Aorta (tissue), 5 donors: ENCODE measurements at regions of chr20 and their contacts with region 1.

Region 1: GRCh38 chr20:59087829-59088433 is 45.3 kb upstream of the PRELID3B start:
- DNase-seq: peak; percentile 86 to 93
- ATAC-seq: peak; percentile 82
- H3K4me3 ChIP-seq: no peak overlapping the region
- H3K27ac ChIP-seq: no peak overlapping the region
- H3K4me1 ChIP-seq: no peaks in the 10 kb centered on the region
- H3K27me3 ChIP-seq: no peaks in the 10 kb centered on the region

Region 2: GRCh38 chr20:58870239-58871014 is 217.5 kb before region 1 on chr20:
- intact Hi-C with region 1: loop called in 1 of 2 experiments (anchors 10 kb)
- DNase-seq: peak; percentile 79 to 85
- ATAC-seq: peak; percentile 79
- H3K4me3 ChIP-seq: no peak overlapping the region
- H3K27ac ChIP-seq: no peak overlapping the region
- H3K4me1 ChIP-seq: no peaks in the 10 kb centered on the region
- H3K27me3 ChIP-seq: no peaks in the 10 kb centered on the region

Region 3: DNA sequence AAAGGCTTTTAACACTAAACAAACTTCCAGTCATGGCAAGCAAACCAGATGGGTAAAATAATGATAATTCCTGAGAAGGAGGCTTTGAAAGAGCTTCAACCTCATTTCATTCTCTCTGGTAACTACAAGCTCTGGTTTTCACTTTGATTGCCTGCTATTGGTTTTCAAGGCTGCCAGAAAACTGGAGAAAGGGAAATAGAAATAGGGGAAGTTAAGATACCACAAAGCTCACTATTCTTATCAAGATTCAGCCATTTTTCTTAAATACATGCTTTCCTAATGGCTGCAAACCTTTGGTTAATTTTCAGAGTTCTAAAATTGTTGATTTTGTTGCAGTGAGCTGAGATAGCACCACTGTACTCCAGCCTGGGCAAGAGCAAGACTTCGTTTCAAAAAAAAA is 149.4 kb before region 1 on chr20:
- intact Hi-C with region 1: no loop called
- DNase-seq: no peak
- ATAC-seq: no peak
- H3K4me3 ChIP-seq: no peak overlapping the region
- H3K27ac ChIP-seq: no peak overlapping the region
- H3K4me1 ChIP-seq: no peaks in the 10 kb centered on the region
- H3K27me3 ChIP-seq: no peaks in the 10 kb centered on the region

Region 4: GRCh38 chr20:59020938-59021551 is 66.9 kb before region 1 on chr20:
- intact Hi-C with region 1: no loop called
- DNase-seq: no peak
- ATAC-seq: no peak
- H3K4me3 ChIP-seq: no peak overlapping the region
- H3K27ac ChIP-seq: no peak overlapping the region
- H3K4me1 ChIP-seq: no peaks in the 10 kb centered on the region
- H3K27me3 ChIP-seq: no peaks in the 10 kb centered on the region

Region 5: GRCh38 chr20:59222253-59223181 is 134.6 kb after region 1 on chr20:
- intact Hi-C with region 1: loop called (anchors 2 kb)
- DNase-seq: peak; percentile 78 to 93
- ATAC-seq: peak; percentile 95
- H3K4me3 ChIP-seq: peak overlapping the region; percentile 9 to 30
- H3K27ac ChIP-seq: no peak overlapping the region
- H3K4me1 ChIP-seq: no peaks in the 10 kb centered on the region
- H3K27me3 ChIP-seq: no peaks in the 10 kb centered on the region

Region 6: DNA sequence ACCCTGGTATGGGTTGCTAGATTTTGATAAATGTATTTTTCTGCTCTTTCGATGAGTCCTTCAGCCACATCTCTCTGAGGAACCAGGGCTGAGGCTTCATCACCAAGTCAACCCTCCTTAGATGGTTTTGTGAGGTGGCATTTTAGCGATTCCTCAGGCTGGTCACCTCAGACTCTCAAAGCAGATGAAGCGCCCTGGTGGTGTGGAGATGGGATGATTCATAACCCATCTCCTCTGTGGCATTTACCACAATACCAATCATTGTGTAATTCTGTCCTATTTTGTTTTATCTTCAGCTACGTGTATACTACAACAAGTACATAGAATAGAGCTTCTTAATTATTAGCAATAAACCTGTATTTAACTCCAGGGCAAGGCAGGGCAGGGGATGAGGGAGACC is 154.8 kb after region 1 on chr20:
- intact Hi-C with region 1: no loop called
- DNase-seq: no peak
- ATAC-seq: no peak
- H3K4me3 ChIP-seq: no peak overlapping the region
- H3K27ac ChIP-seq: no peak overlapping the region
- H3K4me1 ChIP-seq: no peaks in the 10 kb centered on the region
- H3K27me3 ChIP-seq: no peaks in the 10 kb centered on the region

Region 7: GRCh38 chr20:59455402-59456341 is 367.7 kb after region 1 on chr20:
- intact Hi-C with region 1: loop called (anchors 5 to 10 kb)
- DNase-seq: peak in 1 of 2 donors; percentile 53
- ATAC-seq: peak; percentile 56
- H3K4me3 ChIP-seq: no peak overlapping the region
- H3K27ac ChIP-seq: no peak overlapping the region
- H3K4me1 ChIP-seq: no peaks in the 10 kb centered on the region
- H3K27me3 ChIP-seq: no peaks in the 10 kb centered on the region